ENCODE measurements at regions of chr15 and their contacts with region 1.

Region 1: GRCh38 chr15:36601497-36601932 is 22.1 kb downstream of the CDIN1 start:
- DNase-seq: no peak
- H3K4me3 ChIP-seq: no peak overlapping the region
- H3K27ac ChIP-seq: no peak overlapping the region
- H3K4me1 ChIP-seq: no peaks in the 10 kb centered on the region
- H3K27me3 ChIP-seq: no peaks in the 10 kb centered on the region
- CTCF ChIP-seq: no peak
- POLR2A ChIP-seq: no peak

Region 2: DNA sequence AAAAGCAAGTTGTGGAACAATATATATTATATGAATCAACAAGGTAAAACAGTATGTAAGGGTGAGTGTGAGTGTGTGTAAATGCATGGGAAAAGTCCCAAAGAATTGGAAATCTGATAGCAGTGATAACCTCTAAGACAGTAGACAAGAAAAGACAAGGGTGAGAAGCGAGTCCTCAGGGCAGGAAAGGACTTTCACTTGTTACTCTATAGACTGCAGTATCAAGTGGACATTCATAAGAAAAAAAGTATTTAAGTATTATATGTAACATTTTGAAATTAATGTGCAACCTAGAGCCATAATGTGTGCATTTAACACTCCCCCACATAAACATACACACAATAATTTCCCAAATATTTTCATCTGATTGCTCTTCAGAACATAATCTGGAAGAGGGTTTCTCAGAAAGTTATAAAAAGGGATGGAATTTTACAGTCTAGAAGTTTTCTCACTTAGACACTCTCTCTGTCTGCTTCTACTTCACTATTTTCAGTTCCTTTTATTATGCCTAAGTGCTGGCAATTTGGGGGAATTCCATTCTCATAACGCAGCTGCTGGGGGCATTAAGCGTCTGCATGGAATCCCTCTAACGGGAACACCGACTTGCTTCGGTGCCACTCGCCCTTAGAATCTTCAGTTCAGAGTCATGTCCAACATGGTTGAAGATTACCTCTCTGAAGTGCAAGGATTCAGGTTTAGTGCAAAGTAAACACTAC is 72.1 kb before region 1 on chr15:
- CTCF ChIA-PET with region 1: no interaction called
- POLR2A ChIA-PET with region 1: no interaction called
- dilution Hi-C with region 1: no loop called
- intact Hi-C with region 1: no loop called
- DNase-seq: no peak
- H3K4me3 ChIP-seq: no peak overlapping the region
- H3K27ac ChIP-seq: no peak overlapping the region
- H3K4me1 ChIP-seq: no peaks in the 10 kb centered on the region
- H3K27me3 ChIP-seq: peaks cover 0 to 15% of the 10 kb centered on the region in 2 experiments
- CTCF ChIP-seq: no peak
- POLR2A ChIP-seq: no peak

Region 3: DNA sequence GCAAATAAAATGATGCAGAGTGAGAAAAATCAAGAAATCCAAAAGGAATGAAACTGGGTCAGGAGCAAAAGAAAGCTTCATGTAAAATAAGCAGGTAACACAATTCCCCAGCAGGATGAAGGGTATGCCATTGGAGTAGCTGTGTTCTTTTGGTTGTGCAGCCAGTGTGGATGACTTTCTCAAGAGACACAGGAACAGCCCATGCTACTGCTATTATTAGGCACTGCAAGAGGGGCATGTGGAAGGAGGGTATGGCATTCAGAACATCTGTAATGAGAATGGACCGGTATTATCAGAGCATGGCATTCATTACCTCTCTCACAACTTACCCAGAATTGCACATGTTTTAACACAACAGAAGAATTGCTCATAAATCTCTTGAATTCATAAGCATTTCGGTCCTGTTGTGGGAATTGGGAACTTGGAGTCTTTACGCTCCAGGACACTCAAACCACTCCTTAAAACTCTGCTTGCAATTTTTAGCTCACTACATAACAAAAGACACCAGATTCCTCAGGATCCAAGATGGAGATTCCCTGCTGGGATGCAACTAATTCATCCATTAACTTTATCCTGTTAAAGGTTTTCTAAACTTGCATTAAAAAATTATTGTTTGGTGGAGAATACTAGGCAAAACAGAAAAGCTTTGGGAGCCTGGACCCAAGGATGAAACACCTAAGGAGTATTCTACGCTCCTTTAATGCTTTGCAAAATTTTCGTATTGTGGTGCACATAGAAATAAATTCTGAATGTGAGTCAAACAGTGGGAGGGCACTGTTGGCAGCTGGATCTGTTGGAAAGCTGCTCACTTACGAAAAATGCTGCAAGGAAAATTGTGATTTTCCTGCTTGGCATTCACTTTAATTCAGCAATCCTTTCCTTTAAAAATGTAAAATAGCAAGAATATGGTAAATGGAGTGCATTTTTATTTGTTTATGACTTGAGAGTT is 56.7 kb before region 1 on chr15:
- CTCF ChIA-PET with region 1: no interaction called
- POLR2A ChIA-PET with region 1: no interaction called
- dilution Hi-C with region 1: no loop called
- intact Hi-C with region 1: loop called (anchors 10 kb)
- DNase-seq: no peak
- H3K4me3 ChIP-seq: no peak overlapping the region
- H3K27ac ChIP-seq: no peak overlapping the region
- H3K4me1 ChIP-seq: no peaks in the 10 kb centered on the region
- H3K27me3 ChIP-seq: peaks cover 4 to 5% of the 10 kb centered on the region in 2 experiments
- CTCF ChIP-seq: no peak
- POLR2A ChIP-seq: no peak

Region 4: DNA sequence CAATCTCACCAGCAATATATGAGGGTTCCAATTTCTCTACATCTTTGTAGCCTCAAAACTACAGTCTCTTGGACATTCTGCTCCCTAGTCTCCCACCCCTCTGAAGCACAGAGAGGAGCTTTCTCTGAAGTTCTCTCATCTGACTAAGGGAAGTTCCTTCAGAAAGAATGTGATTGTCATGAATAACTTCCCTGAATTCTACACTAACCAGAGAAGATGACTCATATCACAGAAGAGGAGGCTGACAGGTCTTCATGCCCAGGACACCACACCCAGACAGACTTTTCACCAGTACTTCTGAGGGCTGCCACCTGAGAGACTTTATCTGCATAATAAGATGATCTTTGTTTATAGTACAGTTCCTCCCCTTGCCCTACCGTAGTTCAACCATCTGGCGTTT is 30.7 kb after region 1 on chr15:
- CTCF ChIA-PET with region 1: no interaction called
- POLR2A ChIA-PET with region 1: no interaction called
- dilution Hi-C with region 1: no loop called
- intact Hi-C with region 1: no loop called
- DNase-seq: no peak
- H3K4me3 ChIP-seq: no peak overlapping the region
- H3K27ac ChIP-seq: no peak overlapping the region
- H3K4me1 ChIP-seq: no peaks in the 10 kb centered on the region
- H3K27me3 ChIP-seq: no peaks in the 10 kb centered on the region
- CTCF ChIP-seq: no peak
- POLR2A ChIP-seq: no peak

Measured in endothelial cell of umbilical vein (primary cell).